A549 (cell line): ENCODE measurements at regions of chr17 and their contacts with region 1.

Region 1: GRCh38 chr17:41910701-41911391 is 7.9 kb downstream of the ACLY start:
- DNase-seq: peak; percentile 97 to 98
- ATAC-seq: peak; percentile 68 to 77
- H3K4me3 ChIP-seq: no peak overlapping the region
- H3K27ac ChIP-seq: peak overlapping the region; percentile 93 to 96
- H3K4me1 ChIP-seq: peaks cover 100% of the 10 kb centered on the region
- CTCF ChIP-seq: peak; percentile 13; the same call in 1 of the 3 replicates
- EP300 ChIP-seq: peak; percentile 37 to 63; a peak in 2 of 5 replicates
- POLR2A ChIP-seq: no peak
- RAD21 ChIP-seq: peak; percentile 20 to 49; a peak in 3 of 5 replicates

Region 2: DNA sequence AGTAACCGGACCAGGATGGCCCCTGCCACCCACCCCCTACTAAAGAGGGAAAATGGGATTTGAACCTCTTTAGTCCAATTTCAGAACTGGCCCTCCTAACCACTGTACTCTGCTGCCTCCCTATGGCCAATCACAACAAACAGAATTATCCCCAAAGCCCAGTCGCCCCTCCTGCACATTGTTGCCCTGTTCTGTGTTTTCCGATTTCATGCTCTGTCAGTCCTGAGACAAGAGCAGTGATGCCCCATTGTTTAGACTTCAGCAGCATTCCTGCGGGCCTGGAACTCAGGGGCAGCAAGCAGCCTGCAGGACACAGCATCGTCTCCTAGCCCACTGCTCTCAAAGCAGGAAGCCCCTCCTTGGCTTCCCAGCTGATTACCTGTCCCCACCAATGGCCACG is 25.1 kb before region 1 on chr17:
- CTCF ChIA-PET with region 1: interaction called, 62 read pairs
- POLR2A ChIA-PET with region 1: no interaction called
- DNase-seq: peak; percentile 48 to 66
- ATAC-seq: peak; percentile 62 to 67
- H3K4me3 ChIP-seq: no peak overlapping the region
- H3K27ac ChIP-seq: peak overlapping the region in 1 of 2 experiments; percentile 1; a peak in 1 of 6 replicates
- H3K4me1 ChIP-seq: peaks cover 10% of the 10 kb centered on the region; the same call in 2 of the 3 replicates
- CTCF ChIP-seq: peak; percentile 54
- EP300 ChIP-seq: no peak
- POLR2A ChIP-seq: no peak
- RAD21 ChIP-seq: peak; percentile 60 to 69

Region 3: DNA sequence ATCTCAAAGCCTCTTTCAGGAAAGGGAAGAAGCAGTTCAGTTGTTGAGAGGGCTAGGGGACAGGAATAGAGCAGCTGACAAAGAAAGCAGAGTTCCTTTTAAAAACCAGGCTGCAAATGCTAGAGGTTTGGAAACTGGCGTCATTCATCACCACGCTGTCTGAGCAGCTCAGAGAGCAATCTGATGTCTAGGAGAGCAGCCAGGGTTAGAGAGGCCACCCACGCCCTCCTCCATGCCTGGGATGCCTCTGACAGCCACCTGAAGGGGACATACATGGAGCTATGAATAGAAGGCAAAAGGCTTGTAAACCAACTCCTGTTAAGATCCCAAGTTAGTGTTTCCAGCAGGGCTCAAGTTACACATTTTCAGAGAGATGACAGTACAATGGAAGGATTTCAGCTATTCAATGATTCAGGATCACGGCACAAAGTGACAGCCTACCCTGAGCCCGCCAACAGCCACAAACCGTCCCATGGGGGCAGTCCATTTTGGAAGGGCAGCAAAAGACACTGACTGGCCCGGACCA is 231.6 kb after region 1 on chr17:
- CTCF ChIA-PET with region 1: no interaction called
- POLR2A ChIA-PET with region 1: no interaction called
- DNase-seq: no peak
- ATAC-seq: peak in 1 of 2 experiments; percentile 22; a peak in 1 of 6 replicates
- H3K4me3 ChIP-seq: no peak overlapping the region
- H3K27ac ChIP-seq: no peak overlapping the region
- H3K4me1 ChIP-seq: peaks cover 13% of the 10 kb centered on the region; the same call in 2 of the 3 replicates
- CTCF ChIP-seq: no peak
- EP300 ChIP-seq: no peak
- POLR2A ChIP-seq: no peak
- RAD21 ChIP-seq: no peak